Activated CD4-positive, alpha-beta memory T cell treated with anti-CD3 and anti-CD28 coated beads for 36 hours (primary cell): ENCODE measurements at regions of chr22 and their contacts with region 1.

Region 1: DNA sequence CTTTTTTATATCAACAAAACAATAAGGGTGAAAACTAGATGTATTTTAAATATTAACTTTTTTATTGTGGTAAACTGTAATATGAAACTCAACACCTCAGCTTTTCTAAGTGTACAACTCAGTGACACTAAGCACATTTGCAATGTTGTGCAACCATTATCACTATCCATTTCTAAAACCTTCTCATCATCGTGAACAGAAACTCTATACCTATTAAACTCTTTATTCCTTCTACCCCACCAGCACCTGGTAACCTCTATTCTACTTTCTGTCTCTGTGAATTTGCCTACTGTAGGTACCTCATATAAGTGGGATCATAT is 9.4 kb downstream of the HORMAD2 start:
- DNase-seq: no peak
- H3K4me3 Mint-ChIP-seq: no peak overlapping the region
- H3K27ac Mint-ChIP-seq: no peak overlapping the region
- H3K4me1 Mint-ChIP-seq: peaks cover 7% of the 10 kb centered on the region
- H3K27me3 Mint-ChIP-seq: no peaks in the 10 kb centered on the region

Region 2: GRCh38 chr22:29587938-29588699 is 501.5 kb before region 1 on chr22:
- CTCF ChIA-PET with region 1: interaction called, 12 read pairs
- POLR2A ChIA-PET with region 1: no interaction called
- intact Hi-C with region 1: loop called (anchors 1 kb)
- DNase-seq: no peak
- H3K4me3 Mint-ChIP-seq: no peak overlapping the region
- H3K27ac Mint-ChIP-seq: no peak overlapping the region
- H3K4me1 Mint-ChIP-seq: peaks cover 9% of the 10 kb centered on the region
- H3K27me3 Mint-ChIP-seq: no peaks in the 10 kb centered on the region

Region 3: GRCh38 chr22:29635734-29636357 is 453.8 kb before region 1 on chr22:
- CTCF ChIA-PET with region 1: interaction called, 8 read pairs
- POLR2A ChIA-PET with region 1: no interaction called
- intact Hi-C with region 1: loop called (anchors 2 kb)
- DNase-seq: no peak
- H3K4me3 Mint-ChIP-seq: no peak overlapping the region
- H3K27ac Mint-ChIP-seq: no peak overlapping the region
- H3K4me1 Mint-ChIP-seq: peaks cover 16% of the 10 kb centered on the region
- H3K27me3 Mint-ChIP-seq: no peaks in the 10 kb centered on the region

Region 4: GRCh38 chr22:29689880-29690213 is 399.8 kb before region 1 on chr22:
- CTCF ChIA-PET with region 1: interaction called, 10 read pairs
- POLR2A ChIA-PET with region 1: no interaction called
- intact Hi-C with region 1: loop called (anchors 2 kb)
- DNase-seq: peak; percentile 60
- H3K4me3 Mint-ChIP-seq: no peak overlapping the region
- H3K27ac Mint-ChIP-seq: no peak overlapping the region
- H3K4me1 Mint-ChIP-seq: no peaks in the 10 kb centered on the region
- H3K27me3 Mint-ChIP-seq: no peaks in the 10 kb centered on the region

Region 5: GRCh38 chr22:30159561-30160353 is 70.1 kb after region 1 on chr22:
- CTCF ChIA-PET with region 1: no interaction called
- POLR2A ChIA-PET with region 1: no interaction called
- intact Hi-C with region 1: no loop called
- DNase-seq: no peak
- H3K4me3 Mint-ChIP-seq: no peak overlapping the region
- H3K27ac Mint-ChIP-seq: peak overlapping the region; percentile 85
- H3K4me1 Mint-ChIP-seq: peaks cover 58% of the 10 kb centered on the region
- H3K27me3 Mint-ChIP-seq: no peaks in the 10 kb centered on the region